ENCODE measurements at regions of chr16 and their contacts with region 1.

Region 1: DNA sequence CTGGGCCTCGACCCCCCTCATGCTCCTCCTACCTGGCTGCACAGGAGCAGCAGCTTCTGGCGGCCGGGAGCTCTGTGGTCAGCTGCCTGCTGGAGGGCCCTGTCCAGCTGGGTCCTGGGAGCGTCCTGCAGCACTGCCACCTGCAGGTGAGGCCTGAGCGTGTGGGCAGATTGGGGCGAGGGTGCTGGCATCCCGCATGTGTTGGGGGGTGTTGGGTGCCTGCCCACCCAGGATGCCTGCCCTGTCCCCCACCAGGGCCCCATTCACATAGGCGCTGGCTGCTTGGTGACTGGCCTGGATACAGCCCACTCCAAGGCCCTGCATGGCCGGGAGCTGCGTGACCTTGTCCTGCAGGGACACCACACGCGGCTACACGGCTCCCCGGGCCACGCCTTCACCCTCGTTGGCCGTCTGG is 16.5 kb downstream of the FCSK start:
- DNase-seq: no peak
- H3K4me3 ChIP-seq: no peak overlapping the region
- H3K27ac ChIP-seq: no peak overlapping the region
- H3K4me1 ChIP-seq: no peaks in the 10 kb centered on the region
- H3K27me3 ChIP-seq: no peaks in the 10 kb centered on the region
- CTCF ChIP-seq: peak in 1 of 3 experiments; percentile 30
- POLR2A ChIP-seq: no peak

Region 2: GRCh38 chr16:70416748-70417616 is 54.0 kb before region 1 on chr16:
- intact Hi-C with region 1: loop called (anchors 5 kb)
- DNase-seq: no peak
- H3K4me3 ChIP-seq: no peak overlapping the region
- H3K27ac ChIP-seq: no peak overlapping the region
- H3K4me1 ChIP-seq: peaks cover 31% of the 10 kb centered on the region
- H3K27me3 ChIP-seq: no peaks in the 10 kb centered on the region
- CTCF ChIP-seq: no peak
- POLR2A ChIP-seq: no peak

Region 3: DNA sequence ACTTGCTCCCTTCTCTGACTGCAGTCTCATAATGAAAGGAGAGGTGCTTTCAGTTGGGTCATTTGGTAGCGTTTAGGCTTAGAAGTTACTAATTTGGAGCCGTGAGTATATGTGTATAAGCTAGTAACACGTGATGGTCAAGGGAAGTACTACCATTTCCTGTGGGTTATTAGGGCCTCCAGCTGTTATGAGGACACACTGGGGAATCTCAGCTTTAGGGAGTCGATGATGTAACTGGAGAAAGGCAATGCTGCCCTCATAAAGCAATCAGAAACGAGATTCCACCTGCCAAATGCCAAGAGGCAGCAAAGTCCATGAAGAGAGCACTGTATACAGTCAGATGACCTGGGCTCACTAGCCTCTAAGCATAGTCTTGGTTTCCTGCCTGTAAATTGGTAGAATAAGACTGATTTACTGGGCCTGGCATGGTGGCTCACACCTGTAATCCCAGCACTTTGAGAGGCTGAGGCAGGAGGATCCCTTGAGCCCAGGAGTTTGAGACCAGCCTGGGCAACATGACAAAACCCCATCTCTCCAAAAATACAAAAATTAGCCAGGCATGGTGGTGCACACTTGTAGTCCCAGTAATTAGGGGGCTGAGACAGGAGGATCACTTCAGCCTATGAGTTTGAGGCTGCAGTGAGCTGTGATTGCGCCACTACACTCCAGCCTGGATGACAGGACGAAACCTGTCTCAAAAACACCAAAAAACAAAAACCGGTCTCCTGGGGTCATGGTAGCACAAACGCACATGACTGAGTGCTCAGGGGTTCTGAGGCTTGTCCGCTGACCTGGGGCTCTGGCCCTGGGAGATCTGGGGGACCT is 105.7 kb after region 1 on chr16:
- intact Hi-C with region 1: no loop called
- DNase-seq: no peak
- H3K4me3 ChIP-seq: no peak overlapping the region
- H3K27ac ChIP-seq: peak overlapping the region; percentile 43
- H3K4me1 ChIP-seq: peaks cover 70% of the 10 kb centered on the region
- H3K27me3 ChIP-seq: no peaks in the 10 kb centered on the region
- CTCF ChIP-seq: no peak
- POLR2A ChIP-seq: no peak